ENCODE measurements at regions of chr3 and their contacts with region 1.

Region 1: DNA sequence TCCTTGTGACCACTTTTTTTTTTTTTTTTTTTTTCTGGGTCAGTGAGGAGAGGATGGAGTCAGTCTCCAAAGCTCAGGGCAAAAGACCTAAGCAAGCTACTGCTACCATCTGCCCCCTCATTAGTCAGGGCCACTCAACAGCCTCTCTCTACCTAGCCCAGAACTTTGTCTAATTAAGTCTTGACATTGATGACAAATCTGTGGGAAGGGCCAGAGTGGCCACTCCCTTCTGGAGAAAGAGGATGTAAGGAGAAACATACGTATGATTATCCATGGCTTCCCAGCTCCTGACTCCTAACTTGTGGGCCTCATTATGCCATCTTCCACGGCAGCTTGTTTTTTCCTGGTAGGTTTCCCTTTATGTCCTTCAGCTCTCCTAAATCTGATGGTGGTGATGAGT is 37.9 kb downstream of the NR1I2 start:
- DNase-seq: no peak
- H3K4me3 ChIP-seq: no peak overlapping the region
- H3K27ac ChIP-seq: no peak overlapping the region
- H3K4me1 ChIP-seq: no peaks in the 10 kb centered on the region; a peak in 1 of 7 replicates
- H3K27me3 ChIP-seq: no peaks in the 10 kb centered on the region
- CTCF ChIP-seq: no peak
- EP300 ChIP-seq: no peak
- POLR2A ChIP-seq: no peak
- RAD21 ChIP-seq: no peak

Region 2: DNA sequence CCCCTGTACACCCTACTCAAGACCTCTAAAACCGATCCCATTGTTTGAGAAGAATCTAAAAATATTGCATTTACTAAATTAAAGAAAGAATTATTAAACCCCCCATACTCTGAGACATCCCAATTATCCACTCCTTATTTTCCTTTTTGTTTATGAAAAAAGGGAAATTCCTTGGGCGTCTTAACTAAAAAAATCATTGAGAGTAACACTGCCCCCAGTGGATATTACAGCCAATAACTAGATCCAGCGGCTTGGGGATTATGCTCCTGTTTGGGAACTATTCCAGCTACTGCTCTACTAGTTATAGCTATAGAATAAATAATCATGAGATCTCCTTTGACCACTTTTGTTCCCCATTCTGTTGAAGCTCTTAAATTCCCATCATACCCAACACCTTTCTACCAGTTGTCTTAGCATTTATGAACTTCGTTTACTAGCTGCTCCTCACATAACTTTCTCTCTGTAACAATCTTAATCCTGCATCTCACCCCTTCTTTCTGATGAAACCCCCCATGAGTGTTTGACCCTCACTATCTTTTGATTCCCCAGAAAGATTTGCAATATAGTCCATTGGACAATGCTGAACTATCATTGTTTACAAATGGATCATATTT is 129.7 kb before region 1 on chr3:
- CTCF ChIA-PET with region 1: no interaction called
- POLR2A ChIA-PET with region 1: no interaction called
- DNase-seq: no peak
- H3K4me3 ChIP-seq: no peak overlapping the region
- H3K27ac ChIP-seq: no peak overlapping the region
- H3K4me1 ChIP-seq: no peaks in the 10 kb centered on the region
- H3K27me3 ChIP-seq: peaks cover 0 to 2% (median 0%) of the 10 kb centered on the region in 4 experiments; a peak in 2 of 7 replicates
- CTCF ChIP-seq: peak in 2 of 3 experiments; percentile 27 to 45; a peak in 2 of 4 replicates
- EP300 ChIP-seq: no peak
- POLR2A ChIP-seq: no peak
- RAD21 ChIP-seq: peak; percentile 23 to 25; a peak in 2 of 4 replicates

Region 3: DNA sequence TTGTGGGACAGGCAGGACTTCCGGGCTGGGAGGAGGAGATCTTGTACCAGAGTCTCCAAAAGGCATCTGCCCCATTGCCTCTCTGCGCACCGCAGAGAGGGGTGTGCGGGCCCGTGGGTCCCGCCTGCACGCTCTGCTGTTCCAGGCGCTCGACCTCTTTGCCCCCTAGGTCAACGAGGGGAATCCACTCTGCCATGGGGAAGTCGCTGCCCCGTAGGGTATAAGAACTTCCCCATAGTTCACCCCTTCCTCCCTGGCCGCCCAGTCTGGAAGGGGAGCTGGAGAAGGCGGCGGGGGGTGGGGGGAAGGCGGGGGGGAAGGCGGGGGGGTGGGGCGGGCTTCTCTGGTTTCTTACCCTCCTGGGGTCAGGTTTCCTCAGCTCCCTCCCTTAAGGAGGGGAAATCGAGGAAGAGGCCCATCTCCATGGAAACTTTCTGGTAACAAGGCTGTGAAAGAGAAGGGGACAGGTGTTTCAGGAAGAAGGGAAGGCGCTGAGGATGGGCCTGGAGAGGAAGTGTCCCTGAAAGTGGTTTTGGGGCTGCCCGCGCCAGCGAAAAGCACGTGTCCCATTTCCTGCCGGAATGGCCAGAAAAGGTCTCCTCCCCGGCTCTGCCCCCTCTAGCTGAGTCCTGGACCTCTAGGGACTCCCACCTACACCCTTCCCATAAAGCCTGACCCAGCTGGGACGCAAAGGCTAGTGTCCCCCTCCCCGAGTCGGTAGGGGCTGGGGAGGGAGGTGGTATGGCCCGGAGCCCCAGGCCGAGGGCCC is 10.4 kb before region 1 on chr3:
- CTCF ChIA-PET with region 1: interaction called, 17 read pairs
- POLR2A ChIA-PET with region 1: interaction called, 10 read pairs
- DNase-seq: no peak
- H3K4me3 ChIP-seq: peak overlapping the region; percentile 34 to 64 (median 45); a peak in 7 of 8 replicates
- H3K27ac ChIP-seq: no peak overlapping the region; the same call in 1 of the 2 replicates
- H3K4me1 ChIP-seq: peaks cover 0 to 8% (median 3%) of the 10 kb centered on the region in 4 experiments; a peak in 5 of 7 replicates
- H3K27me3 ChIP-seq: peaks cover 0 to 6% (median 1%) of the 10 kb centered on the region in 4 experiments; a peak in 3 of 7 replicates
- CTCF ChIP-seq: no peak
- EP300 ChIP-seq: no peak
- POLR2A ChIP-seq: 0 out of 3 replicates have a peak, but pooled peaks of 1 of the 2 experiments have one; percentile 16
- RAD21 ChIP-seq: no peak

Region 4: GRCh38 chr3:119831022-119831421 is 11.2 kb after region 1 on chr3:
- CTCF ChIA-PET with region 1: interaction called, 17 read pairs
- POLR2A ChIA-PET with region 1: interaction called, 3 read pairs
- DNase-seq: no peak
- H3K4me3 ChIP-seq: no peak overlapping the region
- H3K27ac ChIP-seq: no peak overlapping the region
- H3K4me1 ChIP-seq: peaks cover 0 to 3% (median 1%) of the 10 kb centered on the region in 4 experiments; a peak in 2 of 7 replicates
- H3K27me3 ChIP-seq: no peaks in the 10 kb centered on the region
- CTCF ChIP-seq: peak in 2 of 3 experiments; percentile 9 to 45; a peak in 2 of 4 replicates
- EP300 ChIP-seq: no peak
- POLR2A ChIP-seq: no peak
- RAD21 ChIP-seq: peak in 1 of 2 experiments; percentile 18; a peak in 1 of 4 replicates

Region 5: GRCh38 chr3:119873646-119874045 is 53.8 kb after region 1 on chr3:
- CTCF ChIA-PET with region 1: no interaction called
- POLR2A ChIA-PET with region 1: no interaction called
- DNase-seq: no peak
- H3K4me3 ChIP-seq: no peak overlapping the region
- H3K27ac ChIP-seq: no peak overlapping the region
- H3K4me1 ChIP-seq: peaks cover 0 to 3% (median 1%) of the 10 kb centered on the region in 4 experiments; a peak in 2 of 7 replicates
- H3K27me3 ChIP-seq: no peaks in the 10 kb centered on the region
- CTCF ChIP-seq: no peak
- EP300 ChIP-seq: no peak
- POLR2A ChIP-seq: no peak
- RAD21 ChIP-seq: no peak

Region 6: GRCh38 chr3:120311863-120312794 is 492.3 kb after region 1 on chr3:
- CTCF ChIA-PET with region 1: no interaction called
- POLR2A ChIA-PET with region 1: no interaction called
- DNase-seq: no peak
- H3K4me3 ChIP-seq: no peak overlapping the region
- H3K27ac ChIP-seq: no peak overlapping the region
- H3K4me1 ChIP-seq: no peaks in the 10 kb centered on the region
- H3K27me3 ChIP-seq: no peaks in the 10 kb centered on the region
- CTCF ChIP-seq: no peak
- EP300 ChIP-seq: no peak
- POLR2A ChIP-seq: no peak
- RAD21 ChIP-seq: no peak